GM12878 (cell line): ENCODE measurements at regions of chrX and their contacts with region 1.

Region 1: DNA sequence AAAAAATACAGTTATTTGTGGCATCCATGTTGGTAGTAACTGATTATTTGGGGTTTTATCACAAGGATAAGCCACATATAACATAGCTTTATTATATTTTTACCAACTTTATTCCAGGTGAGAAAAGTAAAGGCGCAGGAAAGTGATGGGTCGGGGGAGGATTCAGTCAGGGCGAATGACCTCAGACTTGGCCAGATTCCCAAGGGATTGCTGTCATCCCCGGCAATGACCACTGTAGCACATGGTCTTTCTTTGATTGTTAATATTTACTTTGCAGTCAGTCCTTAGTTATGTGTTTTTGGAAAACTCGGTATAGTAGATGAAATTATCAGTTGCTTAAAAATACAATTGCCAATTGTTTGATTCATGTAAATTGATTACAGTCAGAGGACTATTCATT is 17.6 kb downstream of the GRIA3 start:
- DNase-seq: no peak
- ATAC-seq: no peak
- H3K4me3 ChIP-seq: no peak overlapping the region
- H3K27ac ChIP-seq: no peak overlapping the region
- H3K4me1 ChIP-seq: no peaks in the 10 kb centered on the region
- H3K27me3 ChIP-seq: no peaks in the 10 kb centered on the region
- CTCF ChIP-seq: no peak
- EP300 ChIP-seq: no peak
- POLR2A ChIP-seq: no peak
- RAD21 ChIP-seq: no peak

Region 2: DNA sequence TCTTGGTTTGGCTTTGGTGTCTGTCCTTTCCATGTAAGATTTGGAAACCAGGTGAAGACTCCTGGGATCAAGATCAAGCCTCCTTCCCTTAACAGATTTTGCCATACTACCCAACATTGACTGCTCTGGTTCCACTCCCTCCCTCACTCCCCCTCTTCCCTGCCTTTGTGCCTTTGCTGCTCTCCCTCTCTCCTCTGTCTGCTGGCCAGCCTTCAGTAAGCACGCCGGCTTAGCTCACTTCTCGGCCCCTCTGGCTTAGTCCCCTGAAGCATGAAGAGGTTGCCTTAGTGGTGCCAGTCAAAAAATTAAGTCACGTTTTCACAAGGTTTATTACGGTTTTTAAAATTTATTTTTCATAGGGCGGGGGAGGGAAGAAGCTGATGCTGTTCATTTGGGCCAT is 11.6 kb before region 1 on chrX:
- CTCF ChIA-PET with region 1: interaction called, 7 read pairs
- POLR2A ChIA-PET with region 1: no interaction called
- RAD21 ChIA-PET with region 1: no interaction called
- SMC1A ChIA-PET with region 1: interaction called, 13 read pairs
- in situ Hi-C with region 1: no loop called
- intact Hi-C with region 1: no loop called
- DNase-seq: no peak
- ATAC-seq: no peak
- H3K4me3 ChIP-seq: no peak overlapping the region
- H3K27ac ChIP-seq: no peak overlapping the region
- H3K4me1 ChIP-seq: no peaks in the 10 kb centered on the region
- H3K27me3 ChIP-seq: no peaks in the 10 kb centered on the region
- CTCF ChIP-seq: no peak
- EP300 ChIP-seq: no peak
- POLR2A ChIP-seq: no peak
- RAD21 ChIP-seq: no peak

Region 3: DNA sequence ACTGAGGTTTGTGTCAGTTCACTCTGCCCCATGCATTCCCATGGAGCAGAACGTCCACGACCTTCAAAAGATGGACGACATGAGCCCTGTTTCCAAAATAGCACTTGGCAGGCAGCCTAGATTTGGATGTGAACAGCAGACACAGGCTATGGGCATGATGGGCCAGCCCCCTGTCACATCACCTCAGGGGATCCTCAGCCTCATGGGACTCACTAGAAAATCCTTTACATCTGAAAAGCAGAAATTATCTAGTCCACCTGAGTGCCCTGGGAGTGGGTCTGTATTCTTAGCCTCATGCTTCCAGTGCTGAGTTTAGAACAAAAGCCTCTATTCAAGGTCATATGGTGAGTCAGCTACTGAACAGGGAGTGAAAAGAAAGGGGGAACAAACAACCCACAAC is 18.2 kb after region 1 on chrX:
- CTCF ChIA-PET with region 1: interaction called, 12 read pairs
- POLR2A ChIA-PET with region 1: no interaction called
- RAD21 ChIA-PET with region 1: no interaction called
- SMC1A ChIA-PET with region 1: interaction called, 7 read pairs
- in situ Hi-C with region 1: no loop called
- intact Hi-C with region 1: no loop called
- DNase-seq: no peak
- ATAC-seq: no peak
- H3K4me3 ChIP-seq: no peak overlapping the region
- H3K27ac ChIP-seq: no peak overlapping the region
- H3K4me1 ChIP-seq: no peaks in the 10 kb centered on the region
- H3K27me3 ChIP-seq: no peaks in the 10 kb centered on the region
- CTCF ChIP-seq: no peak
- EP300 ChIP-seq: no peak
- POLR2A ChIP-seq: no peak
- RAD21 ChIP-seq: no peak